Kidney (tissue), 22 donors: ENCODE measurements at regions of chr17 and their contacts with region 1.

Region 1: DNA sequence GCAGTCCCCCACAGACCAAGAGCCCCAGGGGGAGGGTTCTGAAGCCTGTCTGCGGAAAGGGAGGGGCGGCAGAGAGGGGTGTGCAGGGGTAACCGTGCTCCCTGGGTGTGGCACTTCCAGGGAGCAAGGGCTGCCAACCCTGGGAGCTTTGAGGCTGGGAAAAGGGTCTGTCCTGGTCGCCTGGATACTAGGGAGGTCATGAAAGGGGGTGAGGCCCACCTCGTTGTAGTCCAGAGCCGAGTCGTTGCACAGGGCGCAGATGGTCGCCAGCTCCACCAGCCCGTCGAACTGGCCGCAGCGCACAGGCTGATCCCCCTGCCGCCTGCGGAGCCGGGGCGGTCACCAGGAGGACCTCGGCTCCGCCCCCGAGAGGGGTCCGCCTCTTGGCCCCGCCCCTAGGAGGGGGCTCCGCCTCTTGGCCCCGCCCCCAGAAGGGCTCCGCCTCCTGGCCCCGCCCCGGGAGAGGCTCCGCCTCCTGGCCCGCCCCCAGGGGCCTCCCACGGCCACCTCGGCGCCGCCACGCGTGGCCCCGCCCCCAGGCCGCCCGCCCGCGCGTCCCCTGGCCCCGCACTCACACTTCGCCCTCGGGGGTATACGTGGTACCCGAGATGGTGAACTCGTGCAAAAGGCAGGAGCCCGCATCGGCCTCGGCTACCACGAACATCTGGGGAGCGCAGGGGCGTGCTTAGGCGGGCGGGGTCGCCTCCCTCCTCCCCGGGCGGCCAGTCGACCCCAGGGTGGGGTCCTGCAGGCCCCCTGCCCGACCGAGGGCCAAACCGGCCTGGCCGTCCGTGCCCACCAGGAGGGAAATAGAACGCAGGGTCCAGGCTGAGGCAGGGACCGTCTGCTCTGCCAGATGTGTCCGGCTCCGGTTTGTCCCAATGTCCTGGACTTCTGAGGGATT is 19.5 kb downstream of the ATP2A3 start:
- DNase-seq: peak; percentile 71 to 90 (median 83)
- H3K4me3 ChIP-seq: no peak overlapping the region
- H3K27ac ChIP-seq: no peak overlapping the region
- H3K4me1 ChIP-seq: peaks cover 0 to 5% (median 0%) of the 10 kb centered on the region in 3 donors
- H3K27me3 ChIP-seq: no peaks in the 10 kb centered on the region
- CTCF ChIP-seq: no peak

Region 2: DNA sequence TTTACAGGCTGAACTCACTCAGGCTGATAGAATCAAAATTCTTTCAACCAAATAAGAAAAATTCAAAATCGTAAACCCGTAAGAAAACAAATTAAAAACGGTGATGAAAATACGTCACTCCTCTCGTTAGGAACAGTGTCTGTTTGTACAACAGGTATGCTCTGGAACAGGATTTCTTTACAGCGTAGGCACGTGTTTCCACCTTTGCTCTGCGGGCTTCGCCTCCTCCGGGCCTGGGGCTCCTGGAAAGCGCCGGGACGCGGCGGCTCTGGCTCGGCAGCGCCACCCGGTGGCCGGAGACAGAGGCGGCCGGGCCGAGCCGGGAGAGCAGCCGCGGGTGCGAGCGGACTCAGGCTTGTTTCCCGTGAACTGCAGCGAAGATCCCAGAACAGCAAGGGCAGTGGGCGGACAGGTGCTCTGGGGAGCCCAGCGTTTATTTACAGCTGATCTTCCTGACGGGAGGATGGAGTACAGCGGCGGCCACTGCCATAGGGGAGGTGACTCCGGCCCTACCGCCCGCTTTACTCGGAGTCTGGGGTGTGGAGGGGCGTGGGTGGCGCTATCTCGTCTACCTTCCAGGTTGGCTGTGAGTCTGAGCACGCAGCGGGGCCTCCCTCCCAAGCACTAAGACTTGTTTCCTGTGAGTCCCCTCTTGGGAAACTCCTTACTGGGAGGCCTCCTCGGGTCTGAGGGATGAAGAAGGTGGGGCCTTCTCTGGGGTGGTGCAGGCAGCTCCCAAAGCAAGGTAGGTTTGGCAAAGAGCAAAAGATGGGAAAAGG is 60.0 kb after region 1 on chr17:
- intact Hi-C with region 1: loop called (anchors 10 kb)
- DNase-seq: peak; percentile 72 to 87 (median 80)
- H3K4me3 ChIP-seq: no peak overlapping the region
- H3K27ac ChIP-seq: no peak overlapping the region
- H3K4me1 ChIP-seq: peaks cover 0 to 5% (median 3%) of the 10 kb centered on the region in 3 donors
- H3K27me3 ChIP-seq: no peaks in the 10 kb centered on the region
- CTCF ChIP-seq: peak; percentile 83